Activated B cell treated with CpG ODN at 0.5 μM for 24 hours (primary cell): ENCODE measurements at regions of chr16 and their contacts with region 1.

Region 1: DNA sequence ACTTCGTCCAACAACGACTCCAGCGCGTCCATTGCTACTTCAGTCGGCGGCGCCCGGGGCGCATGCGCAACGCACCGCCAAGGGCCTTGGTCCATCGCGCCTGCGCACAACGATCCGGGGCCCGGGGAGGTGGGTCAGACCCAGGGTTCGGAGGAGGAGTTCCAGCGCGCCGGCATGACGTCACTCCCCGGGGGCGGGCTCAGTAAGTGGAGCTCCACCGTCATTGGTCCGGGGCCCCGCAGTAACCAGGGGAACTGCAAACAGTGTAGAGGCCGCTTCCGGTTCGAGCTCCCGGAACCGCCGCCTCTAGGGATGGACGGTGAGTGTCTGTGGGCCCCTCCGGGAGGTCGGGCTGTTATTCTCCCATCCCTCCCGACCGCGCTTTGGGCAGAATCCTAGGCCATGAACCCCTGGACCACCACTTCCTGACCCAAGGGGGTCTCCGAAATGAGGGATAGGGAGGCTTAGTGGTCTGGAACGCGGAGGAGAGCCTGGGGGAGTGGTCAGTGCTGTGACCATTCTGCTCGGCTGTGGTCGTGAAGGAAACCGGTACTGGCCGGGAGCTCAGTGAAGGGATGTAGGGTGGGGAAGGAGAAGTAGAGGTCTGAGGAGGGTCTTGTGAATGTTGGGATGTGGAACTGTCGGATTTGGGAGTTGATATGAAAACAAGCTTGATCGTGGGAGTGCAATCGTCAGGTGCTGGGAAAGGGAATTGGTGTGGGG is at the starts of genes GTF3C1 and KATNIP:
- DNase-seq: peak; percentile 100
- ATAC-seq: peak; percentile 99
- H3K4me3 Mint-ChIP-seq: peak within 1 kb of the TSS; percentile 95
- H3K27ac Mint-ChIP-seq: peak within 1 kb of the TSS; percentile 94
- H3K4me1 Mint-ChIP-seq: peaks cover 34% of the 10 kb centered on the region
- H3K27me3 Mint-ChIP-seq: no peaks in the 10 kb centered on the region
- CTCF ChIP-seq: no peak
- total RNA-seq, gene GTF3C1: 47.7 and 52.3 TPM in 2 replicates
- total RNA-seq, gene KATNIP: 32.3 and 40.4 TPM in 2 replicates

Region 2: GRCh38 chr16:28126684-28127620 is 576.9 kb after region 1 on chr16:
- CTCF ChIA-PET with region 1: no interaction called
- POLR2A ChIA-PET with region 1: no interaction called
- intact Hi-C with region 1: loop called (anchors 10 kb)
- DNase-seq: no peak
- ATAC-seq: no peak
- H3K4me3 Mint-ChIP-seq: no peak overlapping the region
- H3K27ac Mint-ChIP-seq: no peak overlapping the region
- H3K4me1 Mint-ChIP-seq: peaks cover 2% of the 10 kb centered on the region
- H3K27me3 Mint-ChIP-seq: no peaks in the 10 kb centered on the region
- CTCF ChIP-seq: no peak